ENCODE measurements at regions of chr10 and their contacts with region 1.

Region 1: DNA sequence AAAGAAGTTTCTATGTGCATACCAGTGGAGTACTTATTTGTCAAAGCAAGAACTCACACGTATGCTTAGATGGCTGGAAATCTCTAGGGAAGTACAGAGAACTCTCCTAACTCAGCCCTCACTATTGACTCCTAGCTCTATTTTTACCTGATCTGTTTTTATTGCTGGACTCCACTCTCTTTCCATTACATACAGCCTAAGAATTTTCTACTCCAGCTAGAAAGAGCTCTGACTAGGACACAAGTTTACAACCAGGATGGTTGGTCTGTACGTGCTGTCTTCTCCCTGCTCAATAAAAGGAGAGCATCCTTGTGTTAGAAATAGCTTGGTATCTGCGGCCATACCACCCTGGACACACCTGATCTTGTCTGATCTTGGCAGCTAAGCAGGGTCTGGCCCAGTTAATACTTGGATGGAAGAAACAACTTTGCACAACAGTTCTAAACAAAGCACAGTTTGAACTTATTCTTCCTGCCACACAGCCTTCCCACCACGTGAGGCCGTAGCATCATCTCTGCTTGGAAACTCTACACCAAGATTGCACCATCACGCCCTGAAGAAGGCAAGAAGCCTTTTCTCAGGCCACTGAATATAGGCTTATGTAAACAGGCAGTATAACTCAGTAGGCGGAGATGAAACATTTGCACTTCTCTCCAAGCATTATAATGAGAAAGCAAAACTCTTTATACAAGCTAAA is 50.7 kb downstream of the KCNMA1 start:
- DNase-seq: peak; percentile 79 to 89
- H3K4me3 ChIP-seq: no peak overlapping the region
- H3K27ac ChIP-seq: peak overlapping the region; percentile 88 to 95
- H3K4me1 ChIP-seq: peaks cover 0 to 97% (median 52%) of the 10 kb centered on the region in 4 donors
- H3K27me3 ChIP-seq: no peaks in the 10 kb centered on the region
- CTCF ChIP-seq: peak in 1 of 2 experiments; percentile 14

Region 2: GRCh38 chr10:77072836-77073662 is 513.8 kb before region 1 on chr10:
- intact Hi-C with region 1: no loop called
- DNase-seq: peak in 1 of 2 donors; percentile 58
- H3K4me3 ChIP-seq: no peak overlapping the region
- H3K27ac ChIP-seq: no peak overlapping the region
- H3K4me1 ChIP-seq: peaks cover 0 to 16% (median 4%) of the 10 kb centered on the region in 4 donors
- H3K27me3 ChIP-seq: no peaks in the 10 kb centered on the region
- CTCF ChIP-seq: no peak

Region 3: DNA sequence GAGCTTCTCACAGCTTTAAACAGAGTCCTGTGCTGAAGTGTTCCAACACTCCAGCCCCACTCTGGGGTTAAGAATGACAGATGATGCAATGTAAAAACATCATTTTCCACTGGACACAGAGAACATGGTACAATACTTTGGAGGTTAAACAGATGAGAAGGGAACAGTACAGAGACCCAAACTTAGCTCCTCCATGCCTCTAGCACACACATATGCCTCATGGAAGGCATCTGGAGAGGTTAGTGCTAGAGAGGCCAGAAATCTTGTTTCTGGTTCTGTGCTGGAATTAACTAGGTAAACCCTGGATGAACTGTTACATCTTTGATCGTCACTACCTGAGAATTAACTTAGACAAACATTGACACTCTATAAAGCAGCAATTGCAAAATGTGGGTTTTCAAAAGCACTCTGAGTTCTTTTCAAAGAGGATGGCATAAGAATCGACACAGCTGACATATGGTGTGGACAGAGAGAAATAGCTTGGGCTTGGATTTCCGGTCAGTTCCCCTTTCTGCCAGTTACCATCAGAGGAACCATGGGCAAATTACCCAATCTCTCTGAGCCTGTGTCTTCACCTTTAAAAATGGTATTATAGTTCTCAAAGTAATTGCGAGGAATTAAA is 31.2 kb before region 1 on chr10:
- intact Hi-C with region 1: loop called (anchors 5 kb)
- DNase-seq: no peak
- H3K4me3 ChIP-seq: no peak overlapping the region
- H3K27ac ChIP-seq: peak overlapping the region; percentile 79 to 84
- H3K4me1 ChIP-seq: peaks cover 0 to 99% (median 68%) of the 10 kb centered on the region in 4 donors
- H3K27me3 ChIP-seq: no peaks in the 10 kb centered on the region
- CTCF ChIP-seq: no peak

Region 4: GRCh38 chr10:77692782-77693181 is 105.9 kb after region 1 on chr10:
- intact Hi-C with region 1: no loop called
- DNase-seq: no peak
- H3K4me3 ChIP-seq: no peak overlapping the region
- H3K27ac ChIP-seq: no peak overlapping the region
- H3K4me1 ChIP-seq: no peaks in the 10 kb centered on the region
- H3K27me3 ChIP-seq: peaks cover 0 to 13% of the 10 kb centered on the region in 2 donors
- CTCF ChIP-seq: no peak